GM12878 (cell line): ENCODE measurements at regions of chr18 and their contacts with region 1.

Region 1: GRCh38 chr18:23725832-23726661 is 36.8 kb downstream of the LAMA3 start:
- DNase-seq: no peak
- ATAC-seq: no peak
- H3K4me3 ChIP-seq: no peak overlapping the region
- H3K27ac ChIP-seq: no peak overlapping the region
- H3K4me1 ChIP-seq: no peaks in the 10 kb centered on the region
- H3K27me3 ChIP-seq: no peaks in the 10 kb centered on the region; a peak in 2 of 4 replicates
- CTCF ChIP-seq: no peak
- EP300 ChIP-seq: no peak
- POLR2A ChIP-seq: no peak
- RAD21 ChIP-seq: no peak

Region 2: GRCh38 chr18:23779696-23780303 is 53.8 kb after region 1 on chr18:
- CTCF ChIA-PET with region 1: no interaction called
- POLR2A ChIA-PET with region 1: no interaction called
- RAD21 ChIA-PET with region 1: no interaction called
- SMC1A ChIA-PET with region 1: no interaction called
- in situ Hi-C with region 1: no loop called
- intact Hi-C with region 1: loop called (anchors 5 kb)
- DNase-seq: no peak
- ATAC-seq: peak; percentile 59; the same call in 2 of the 3 replicates
- H3K4me3 ChIP-seq: no peak overlapping the region
- H3K27ac ChIP-seq: no peak overlapping the region
- H3K4me1 ChIP-seq: no peaks in the 10 kb centered on the region
- H3K27me3 ChIP-seq: no peaks in the 10 kb centered on the region; a peak in 1 of 4 replicates
- CTCF ChIP-seq: no peak
- EP300 ChIP-seq: no peak
- POLR2A ChIP-seq: no peak
- RAD21 ChIP-seq: no peak